Sigmoid colon (tissue), 7 donors: ENCODE measurements at regions of chr15 and their contacts with region 1.

Region 1: GRCh38 chr15:64800476-64800875 is 25.0 kb downstream of the PIF1 start:
- DNase-seq: no peak
- H3K4me3 ChIP-seq: no peak overlapping the region
- H3K27ac ChIP-seq: peak overlapping the region; percentile 81 to 88 (median 83)
- H3K4me1 ChIP-seq: peaks cover 0 to 20% (median 17%) of the 10 kb centered on the region in 4 donors
- H3K27me3 ChIP-seq: no peaks in the 10 kb centered on the region
- CTCF ChIP-seq: no peak
- EP300 ChIP-seq: no peak
- POLR2A ChIP-seq: no peak

Region 2: GRCh38 chr15:63891079-63891767 is 909.3 kb before region 1 on chr15:
- intact Hi-C with region 1: no loop called
- DNase-seq: peak; percentile 87
- H3K4me3 ChIP-seq: no peak overlapping the region
- H3K27ac ChIP-seq: no peak overlapping the region
- H3K4me1 ChIP-seq: no peaks in the 10 kb centered on the region
- H3K27me3 ChIP-seq: no peaks in the 10 kb centered on the region
- CTCF ChIP-seq: peak; percentile 37 to 86 (median 76)
- EP300 ChIP-seq: no peak
- POLR2A ChIP-seq: no peak

Region 3: DNA sequence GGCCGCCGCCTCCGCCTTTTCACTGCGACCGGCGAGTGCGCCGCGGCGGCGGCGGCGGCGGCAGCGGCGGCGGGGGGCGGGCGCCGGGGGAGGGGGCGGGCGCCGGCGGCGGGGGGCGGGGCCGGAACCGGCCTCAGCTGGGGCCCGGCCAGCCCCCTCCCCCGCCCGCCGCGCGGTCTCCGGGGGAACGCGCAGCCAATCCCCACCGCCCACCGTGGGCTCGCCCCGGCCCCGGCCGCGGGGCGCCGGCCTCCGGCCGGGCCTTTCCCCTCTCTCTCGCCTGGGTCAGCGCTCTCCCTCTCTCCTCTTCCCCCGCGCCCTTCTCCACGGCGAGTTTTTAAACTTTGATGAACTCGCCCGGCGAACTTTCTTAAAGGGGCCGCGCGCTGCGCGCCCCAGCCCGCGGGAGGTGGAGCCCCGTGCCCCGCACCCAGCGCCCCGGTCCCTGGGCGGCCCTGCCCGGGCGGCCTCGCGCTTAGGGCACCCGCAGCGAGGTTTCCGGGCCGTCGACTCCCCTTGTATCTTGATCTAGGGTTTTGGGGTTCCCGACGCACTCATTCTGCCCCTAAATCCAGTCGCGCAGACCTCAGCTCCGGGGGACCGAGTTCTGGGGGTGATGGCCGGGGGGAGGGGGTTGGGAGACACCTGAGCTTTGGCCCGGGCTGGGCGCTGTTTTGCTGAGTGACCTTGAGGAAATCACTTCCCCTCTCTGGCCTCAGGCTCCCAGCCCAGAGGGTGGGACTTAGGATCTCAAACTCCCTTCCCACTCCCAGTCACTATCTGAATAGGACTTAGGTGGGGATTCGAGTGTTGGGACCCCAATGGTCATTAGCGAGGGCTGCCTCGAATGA is 24.7 kb before region 1 on chr15 and contains the start of gene RBPMS2:
- intact Hi-C with region 1: loop called (anchors 2 kb)
- DNase-seq: peak; percentile 74
- H3K4me3 ChIP-seq: peak within 1 kb of the TSS; percentile 66 to 96 (median 90)
- H3K27ac ChIP-seq: peak within 1 kb of the TSS; percentile 95 to 99 (median 96)
- H3K4me1 ChIP-seq: peaks cover 0 to 49% (median 38%) of the 10 kb centered on the region in 4 donors
- H3K27me3 ChIP-seq: no peaks in the 10 kb centered on the region
- CTCF ChIP-seq: no peak
- EP300 ChIP-seq: no peak
- POLR2A ChIP-seq: peak in 1 of 2 donors; percentile 29
- total RNA-seq, gene RBPMS2: 22.1 to 58.2 (median 23.6) TPM